ENCODE measurements at regions of chr13 and their contacts with region 1.

Region 1: DNA sequence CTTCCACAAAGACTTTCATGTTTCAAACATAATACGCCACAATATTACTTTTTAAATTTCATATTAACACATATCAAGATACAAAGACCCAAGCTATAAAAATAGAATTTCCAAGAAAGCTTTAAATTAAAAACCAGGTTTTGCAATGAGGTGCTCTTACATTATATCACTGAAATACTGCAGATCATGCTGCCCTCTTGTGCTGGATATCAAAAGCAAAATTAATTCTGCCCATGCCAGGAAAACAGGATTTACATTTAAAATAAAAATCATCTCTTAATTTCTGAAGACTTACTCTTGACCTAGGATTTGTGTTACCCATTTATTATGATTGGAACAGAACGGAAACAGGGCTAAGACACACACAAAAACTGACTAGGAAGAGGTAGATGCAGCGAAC is 145.0 kb downstream of the ABCC4 start:
- DNase-seq: peak; percentile 50
- H3K4me3 ChIP-seq: no peak overlapping the region
- H3K27ac ChIP-seq: no peak overlapping the region
- H3K4me1 ChIP-seq: peaks cover 22% of the 10 kb centered on the region
- H3K27me3 ChIP-seq: no peaks in the 10 kb centered on the region
- CTCF ChIP-seq: peak; percentile 18 to 27
- POLR2A ChIP-seq: no peak

Region 2: GRCh38 chr13:94660695-94661326 is 495.4 kb before region 1 on chr13:
- CTCF ChIA-PET with region 1: interaction called, 42 read pairs
- POLR2A ChIA-PET with region 1: no interaction called
- dilution Hi-C with region 1: no loop called
- intact Hi-C with region 1: no loop called
- DNase-seq: peak; percentile 36
- H3K4me3 ChIP-seq: no peak overlapping the region
- H3K27ac ChIP-seq: no peak overlapping the region
- H3K4me1 ChIP-seq: peaks cover 25% of the 10 kb centered on the region
- H3K27me3 ChIP-seq: peaks cover 0 to 3% of the 10 kb centered on the region in 2 experiments
- CTCF ChIP-seq: peak; percentile 19 to 36
- POLR2A ChIP-seq: no peak

Region 3: DNA sequence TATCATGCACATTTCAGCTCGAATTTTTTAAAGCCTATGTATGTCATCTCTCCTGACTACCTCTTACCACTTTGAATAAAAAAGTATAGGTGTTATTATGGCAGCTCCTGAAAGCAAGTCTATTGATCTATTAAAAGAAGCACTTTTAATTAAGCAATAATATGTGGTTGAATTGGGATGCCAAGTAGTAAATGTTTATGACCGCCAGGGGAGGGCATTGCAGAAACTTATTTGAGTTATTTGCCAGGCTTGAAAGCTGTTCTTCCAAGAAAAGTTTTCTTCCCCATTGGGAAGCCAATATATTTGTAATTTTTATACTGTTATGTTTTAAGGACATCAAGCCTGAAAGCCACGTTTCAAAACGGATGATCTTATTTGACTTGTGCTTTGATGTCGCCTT is 355.8 kb before region 1 on chr13:
- CTCF ChIA-PET with region 1: interaction called, 16 read pairs
- POLR2A ChIA-PET with region 1: no interaction called
- dilution Hi-C with region 1: no loop called
- intact Hi-C with region 1: no loop called
- DNase-seq: no peak
- H3K4me3 ChIP-seq: no peak overlapping the region
- H3K27ac ChIP-seq: no peak overlapping the region
- H3K4me1 ChIP-seq: no peaks in the 10 kb centered on the region
- H3K27me3 ChIP-seq: no peaks in the 10 kb centered on the region
- CTCF ChIP-seq: no peak
- POLR2A ChIP-seq: no peak

Region 4: DNA sequence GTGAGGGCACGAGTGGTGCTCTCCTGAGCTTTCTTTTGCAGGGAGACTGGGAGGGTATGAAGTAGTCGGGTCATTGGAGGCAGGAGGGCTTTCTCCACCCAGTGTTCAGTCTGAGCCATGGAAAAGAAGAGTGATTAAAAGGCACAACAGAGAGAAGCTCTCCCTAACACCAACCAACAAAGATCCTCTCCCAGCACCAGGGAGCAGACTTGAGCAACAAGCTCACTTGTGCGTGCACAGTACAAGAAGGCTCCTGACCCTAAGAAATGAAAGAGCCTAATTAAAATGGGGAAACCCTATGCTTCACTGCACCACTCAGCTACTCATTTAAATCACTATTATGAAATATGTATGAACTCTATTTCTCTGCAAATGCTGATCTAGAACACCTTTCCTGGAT is 167.6 kb before region 1 on chr13:
- CTCF ChIA-PET with region 1: interaction called, 32 read pairs
- POLR2A ChIA-PET with region 1: interaction called, 3 read pairs
- dilution Hi-C with region 1: no loop called
- intact Hi-C with region 1: loop called (anchors 1 kb)
- DNase-seq: peak; percentile 13
- H3K4me3 ChIP-seq: no peak overlapping the region
- H3K27ac ChIP-seq: no peak overlapping the region
- H3K4me1 ChIP-seq: no peaks in the 10 kb centered on the region
- H3K27me3 ChIP-seq: peaks cover 20 to 40% of the 10 kb centered on the region in 2 experiments
- CTCF ChIP-seq: peak in 1 of 2 donors; percentile 14
- POLR2A ChIP-seq: no peak

Region 5: GRCh38 chr13:95083758-95084157 is 72.5 kb before region 1 on chr13:
- CTCF ChIA-PET with region 1: interaction called, 12 read pairs
- POLR2A ChIA-PET with region 1: no interaction called
- dilution Hi-C with region 1: no loop called
- intact Hi-C with region 1: loop called (anchors 1 kb)
- DNase-seq: peak; percentile 86
- H3K4me3 ChIP-seq: no peak overlapping the region
- H3K27ac ChIP-seq: peak overlapping the region; percentile 44
- H3K4me1 ChIP-seq: peaks cover 30% of the 10 kb centered on the region
- H3K27me3 ChIP-seq: no peaks in the 10 kb centered on the region
- CTCF ChIP-seq: no peak
- POLR2A ChIP-seq: no peak

Region 6: DNA sequence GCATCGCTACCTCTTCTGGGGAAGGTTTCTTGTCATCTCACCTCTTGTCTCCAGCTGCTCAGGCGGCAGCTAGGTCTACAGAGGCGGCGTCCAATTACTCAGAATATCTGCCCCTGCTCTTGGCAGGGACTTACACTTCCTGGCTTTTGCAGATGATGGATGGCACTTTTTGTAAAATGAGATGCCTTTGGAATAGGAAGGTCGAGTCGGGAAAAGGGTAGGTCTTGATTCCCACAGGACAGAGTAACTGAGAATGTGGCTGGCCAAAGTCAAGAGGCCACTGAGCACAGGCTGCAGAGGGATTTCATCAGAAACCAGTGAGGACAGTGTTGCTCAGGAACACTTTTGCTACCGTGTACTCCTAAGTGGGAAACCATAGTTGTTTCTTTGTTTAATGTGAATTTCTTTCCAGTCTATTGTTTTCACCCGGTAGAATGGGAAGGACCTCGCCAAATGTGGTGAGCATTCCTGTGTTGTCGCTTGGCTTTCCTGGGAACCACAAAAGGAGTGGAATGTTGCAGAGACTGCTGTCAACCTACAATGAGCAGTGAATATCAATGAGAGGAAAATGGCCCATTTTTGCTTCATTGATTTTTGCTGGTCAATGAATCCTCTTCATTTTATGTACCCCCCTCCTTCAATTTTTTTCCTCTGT is 1317.4 kb after region 1 on chr13:
- CTCF ChIA-PET with region 1: no interaction called
- POLR2A ChIA-PET with region 1: no interaction called
- dilution Hi-C with region 1: no loop called
- intact Hi-C with region 1: no loop called
- DNase-seq: no peak
- H3K4me3 ChIP-seq: no peak overlapping the region
- H3K27ac ChIP-seq: no peak overlapping the region
- H3K4me1 ChIP-seq: no peaks in the 10 kb centered on the region
- H3K27me3 ChIP-seq: no peaks in the 10 kb centered on the region
- CTCF ChIP-seq: no peak
- POLR2A ChIP-seq: no peak